Lower leg skin (tissue), 4 donors: ENCODE measurements at regions of chr17 and their contacts with region 1.

Region 1: GRCh38 chr17:75779231-75779986 is 5.2 kb upstream of the UNK start:
- DNase-seq: peak; percentile 98 to 99
- H3K4me3 ChIP-seq: peak overlapping the region; percentile 79
- CTCF ChIP-seq: peak in 1 of 3 donors; percentile 37
- POLR2A ChIP-seq: peak; percentile 86 to 100

Region 2: GRCh38 chr17:75845049-75845860 is 65.8 kb after region 1 on chr17:
- intact Hi-C with region 1: loop called (anchors 10 kb)
- DNase-seq: peak; percentile 83 to 97
- H3K4me3 ChIP-seq: no peak overlapping the region
- CTCF ChIP-seq: peak in 1 of 3 donors; percentile 92
- POLR2A ChIP-seq: no peak

Region 3: DNA sequence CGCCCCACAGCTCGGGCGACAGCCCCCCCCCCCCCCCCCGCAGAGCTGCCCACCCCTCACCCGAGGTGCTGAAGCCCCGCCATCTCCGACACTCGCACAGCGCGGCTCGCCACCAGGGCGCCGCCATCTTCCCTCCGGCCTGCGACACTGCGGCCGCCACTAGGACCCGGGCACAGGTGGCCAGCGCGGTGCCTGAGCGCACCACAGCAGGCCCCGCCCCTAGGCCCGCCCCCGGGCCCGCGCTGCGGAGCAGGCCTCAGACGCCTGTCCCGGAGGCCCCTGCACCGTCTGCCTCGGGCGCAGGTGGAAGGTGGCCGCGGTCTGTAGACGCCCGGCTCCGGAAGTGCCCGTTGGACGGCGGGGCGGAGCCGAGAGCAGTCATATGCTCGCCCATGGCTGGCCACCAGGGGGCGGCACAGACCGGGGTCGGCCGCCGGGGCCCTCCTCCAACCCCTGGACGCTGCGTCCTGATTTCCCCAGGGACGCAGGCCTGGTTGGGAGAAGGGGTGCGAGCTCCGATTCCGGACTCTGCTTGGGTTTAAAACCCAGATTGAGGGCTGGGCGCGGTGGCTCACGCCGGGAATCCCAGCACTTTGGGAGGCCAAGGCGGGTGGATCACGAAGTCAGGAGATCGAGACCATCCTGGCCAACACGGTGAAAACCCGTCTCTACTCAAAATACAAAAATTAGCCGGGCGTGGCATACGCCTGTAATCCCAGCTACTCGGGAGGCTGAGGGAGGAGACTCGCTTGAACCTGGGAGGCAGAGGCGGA is 125.5 kb after region 1 on chr17 and contains the start of gene MRPL38:
- intact Hi-C with region 1: no loop called
- DNase-seq: peak; percentile 88 to 98
- H3K4me3 ChIP-seq: peak within 1 kb of the TSS; percentile 60
- CTCF ChIP-seq: peak in 2 of 3 donors; percentile 8 to 98
- POLR2A ChIP-seq: no peak
- total RNA-seq, gene MRPL38: 36.5 to 64.7 (median 49.0) TPM